GM12878 (cell line): ENCODE measurements at regions of chr17 and their contacts with region 1.

Region 1: DNA sequence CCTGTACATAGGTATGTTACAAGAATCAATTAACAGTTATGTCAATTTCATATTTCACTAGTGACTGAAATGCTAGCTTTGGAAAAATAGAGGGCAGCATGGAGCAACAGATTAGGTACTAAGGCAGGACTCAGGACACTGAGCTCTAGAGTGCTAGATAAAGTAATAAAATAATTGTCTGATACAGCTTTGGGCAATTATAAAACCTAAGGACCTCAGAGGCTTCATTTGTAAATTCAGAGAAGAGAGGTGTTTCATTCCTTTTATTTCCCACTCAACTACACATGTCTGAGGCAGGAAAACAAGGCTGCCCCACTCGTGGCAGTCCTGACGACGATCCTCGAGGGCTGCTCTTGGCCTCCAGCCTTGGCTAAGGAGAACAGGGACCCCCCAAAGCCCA is 81.5 kb downstream of the CA4 start:
- DNase-seq: no peak
- ATAC-seq: peak; percentile 59; the same call in 2 of the 3 replicates
- H3K4me3 ChIP-seq: no peak overlapping the region
- H3K27ac ChIP-seq: no peak overlapping the region
- H3K4me1 ChIP-seq: no peaks in the 10 kb centered on the region
- H3K27me3 ChIP-seq: no peaks in the 10 kb centered on the region
- CTCF ChIP-seq: peak; percentile 36 to 51 (median 42)
- EP300 ChIP-seq: no peak
- POLR2A ChIP-seq: no peak
- RAD21 ChIP-seq: peak; percentile 54

Region 2: GRCh38 chr17:59734226-59734625 is 497.0 kb before region 1 on chr17:
- CTCF ChIA-PET with region 1: no interaction called
- POLR2A ChIA-PET with region 1: no interaction called
- RAD21 ChIA-PET with region 1: no interaction called
- SMC1A ChIA-PET with region 1: no interaction called
- in situ Hi-C with region 1: no loop called
- intact Hi-C with region 1: no loop called
- DNase-seq: no peak
- ATAC-seq: no peak
- H3K4me3 ChIP-seq: no peak overlapping the region
- H3K27ac ChIP-seq: no peak overlapping the region
- H3K4me1 ChIP-seq: no peaks in the 10 kb centered on the region; the same call in 1 of the 2 replicates
- H3K27me3 ChIP-seq: no peaks in the 10 kb centered on the region
- CTCF ChIP-seq: no peak
- EP300 ChIP-seq: no peak
- POLR2A ChIP-seq: no peak
- RAD21 ChIP-seq: no peak

Region 3: GRCh38 chr17:60165958-60166357 is 65.3 kb before region 1 on chr17:
- CTCF ChIA-PET with region 1: no interaction called
- POLR2A ChIA-PET with region 1: no interaction called
- RAD21 ChIA-PET with region 1: no interaction called
- SMC1A ChIA-PET with region 1: no interaction called
- in situ Hi-C with region 1: no loop called
- intact Hi-C with region 1: no loop called
- DNase-seq: no peak
- ATAC-seq: peak; percentile 84
- H3K4me3 ChIP-seq: no peak overlapping the region
- H3K27ac ChIP-seq: no peak overlapping the region
- H3K4me1 ChIP-seq: peaks cover 3% of the 10 kb centered on the region
- H3K27me3 ChIP-seq: no peaks in the 10 kb centered on the region
- CTCF ChIP-seq: no peak
- EP300 ChIP-seq: no peak
- POLR2A ChIP-seq: no peak
- RAD21 ChIP-seq: no peak

Region 4: DNA sequence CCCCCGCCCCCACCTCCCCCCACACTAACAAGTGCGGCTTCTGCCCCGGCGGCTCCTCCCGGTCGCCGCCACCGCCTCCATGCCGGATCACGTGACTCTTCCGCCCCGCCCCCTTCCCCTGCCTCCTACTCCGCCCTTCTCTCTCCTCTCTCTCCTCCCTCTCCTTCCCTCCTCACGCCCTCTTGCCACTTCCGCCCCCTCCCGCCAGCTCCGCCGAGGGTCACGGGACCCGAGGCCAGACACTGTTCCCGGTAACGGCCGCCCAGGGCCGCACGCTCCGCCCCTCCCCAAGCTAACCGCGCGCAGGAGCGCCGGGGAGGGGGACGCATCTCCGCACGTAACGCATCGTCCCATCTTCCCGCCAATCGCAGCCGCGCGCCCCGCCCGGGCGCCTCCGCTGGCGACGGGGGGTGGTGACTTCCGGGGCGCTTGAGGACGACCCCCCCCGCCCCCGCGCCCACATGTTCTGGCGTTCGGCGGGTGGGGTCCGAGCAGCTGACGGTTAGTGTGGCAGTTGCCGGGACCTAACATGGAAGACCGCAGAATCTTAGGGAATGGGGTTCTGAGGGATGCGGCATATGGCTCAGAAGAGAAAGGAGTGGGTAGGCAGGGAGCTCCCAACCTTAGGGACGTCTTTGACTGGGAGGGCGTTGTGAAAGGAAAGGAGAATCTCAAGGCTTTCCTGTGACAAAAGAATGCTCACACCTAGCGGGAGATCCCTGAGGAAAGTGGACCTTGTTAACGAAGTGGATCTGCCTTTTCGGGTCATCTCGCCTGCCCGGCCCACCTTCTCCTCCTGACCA is 161.0 kb after region 1 on chr17 and contains the start of gene USP32:
- CTCF ChIA-PET with region 1: interaction called, 14 read pairs
- POLR2A ChIA-PET with region 1: no interaction called
- RAD21 ChIA-PET with region 1: interaction called, 9 read pairs
- SMC1A ChIA-PET with region 1: interaction called, 3 read pairs
- in situ Hi-C with region 1: no loop called
- intact Hi-C with region 1: no loop called
- DNase-seq: peak; percentile 96
- ATAC-seq: peak; percentile 88
- H3K4me3 ChIP-seq: peak within 1 kb of the TSS; percentile 97
- H3K27ac ChIP-seq: peak within 1 kb of the TSS; percentile 89
- H3K4me1 ChIP-seq: no peaks in the 10 kb centered on the region
- H3K27me3 ChIP-seq: no peaks in the 10 kb centered on the region
- CTCF ChIP-seq: peak in 2 of 3 experiments; percentile 15 to 16; a peak in 1 of 6 replicates
- EP300 ChIP-seq: peak in 1 of 2 experiments; percentile 36; a peak in 1 of 4 replicates
- POLR2A ChIP-seq: peak; percentile 87
- RAD21 ChIP-seq: no peak
- polyA plus RNA-seq, gene USP32: 7.8 to 9.8 TPM

Region 5: DNA sequence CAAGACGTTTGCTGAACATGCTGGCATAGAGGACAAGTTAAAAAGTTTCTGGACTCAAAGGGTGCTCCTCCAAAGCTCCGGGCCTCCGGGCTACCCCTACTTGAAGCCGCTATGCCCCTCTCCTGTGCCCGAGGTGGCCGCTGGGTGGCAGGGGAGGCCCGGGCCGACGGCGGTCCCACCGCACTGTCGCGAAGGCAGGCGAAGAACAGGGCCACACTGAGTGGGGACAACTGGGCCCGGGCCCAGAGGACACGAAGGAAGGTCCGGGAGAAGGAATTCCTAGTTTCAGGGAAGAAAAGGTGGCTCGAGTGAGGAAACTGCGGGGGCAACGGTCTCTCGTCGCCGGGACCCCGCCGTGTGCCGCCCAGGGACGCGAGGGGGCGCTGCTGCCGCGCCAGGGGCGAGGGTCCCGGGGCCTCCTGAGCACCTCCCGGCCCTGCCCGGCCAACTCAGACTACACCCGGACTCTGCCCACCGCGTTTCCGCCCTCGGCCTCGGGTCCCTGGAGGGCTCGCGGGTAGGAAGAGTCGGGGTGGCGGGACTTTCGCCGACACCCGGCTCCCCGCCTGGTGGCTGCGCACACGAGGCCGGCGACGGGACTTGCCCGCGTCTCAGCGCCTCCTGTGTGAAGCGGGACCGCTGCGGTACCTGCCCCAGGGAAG is 190.2 kb after region 1 on chr17:
- CTCF ChIA-PET with region 1: interaction called, 9 read pairs
- POLR2A ChIA-PET with region 1: no interaction called
- RAD21 ChIA-PET with region 1: interaction called, 9 read pairs
- SMC1A ChIA-PET with region 1: interaction called, 5 read pairs
- in situ Hi-C with region 1: no loop called
- intact Hi-C with region 1: loop called (anchors 5 kb)
- DNase-seq: no peak
- ATAC-seq: peak; percentile 99
- H3K4me3 ChIP-seq: peak overlapping the region; percentile 61
- H3K27ac ChIP-seq: no peak overlapping the region
- H3K4me1 ChIP-seq: no peaks in the 10 kb centered on the region
- H3K27me3 ChIP-seq: no peaks in the 10 kb centered on the region
- CTCF ChIP-seq: peak; percentile 57 to 94 (median 90)
- EP300 ChIP-seq: no peak
- POLR2A ChIP-seq: peak; percentile 75
- RAD21 ChIP-seq: peak; percentile 64

Region 6: DNA sequence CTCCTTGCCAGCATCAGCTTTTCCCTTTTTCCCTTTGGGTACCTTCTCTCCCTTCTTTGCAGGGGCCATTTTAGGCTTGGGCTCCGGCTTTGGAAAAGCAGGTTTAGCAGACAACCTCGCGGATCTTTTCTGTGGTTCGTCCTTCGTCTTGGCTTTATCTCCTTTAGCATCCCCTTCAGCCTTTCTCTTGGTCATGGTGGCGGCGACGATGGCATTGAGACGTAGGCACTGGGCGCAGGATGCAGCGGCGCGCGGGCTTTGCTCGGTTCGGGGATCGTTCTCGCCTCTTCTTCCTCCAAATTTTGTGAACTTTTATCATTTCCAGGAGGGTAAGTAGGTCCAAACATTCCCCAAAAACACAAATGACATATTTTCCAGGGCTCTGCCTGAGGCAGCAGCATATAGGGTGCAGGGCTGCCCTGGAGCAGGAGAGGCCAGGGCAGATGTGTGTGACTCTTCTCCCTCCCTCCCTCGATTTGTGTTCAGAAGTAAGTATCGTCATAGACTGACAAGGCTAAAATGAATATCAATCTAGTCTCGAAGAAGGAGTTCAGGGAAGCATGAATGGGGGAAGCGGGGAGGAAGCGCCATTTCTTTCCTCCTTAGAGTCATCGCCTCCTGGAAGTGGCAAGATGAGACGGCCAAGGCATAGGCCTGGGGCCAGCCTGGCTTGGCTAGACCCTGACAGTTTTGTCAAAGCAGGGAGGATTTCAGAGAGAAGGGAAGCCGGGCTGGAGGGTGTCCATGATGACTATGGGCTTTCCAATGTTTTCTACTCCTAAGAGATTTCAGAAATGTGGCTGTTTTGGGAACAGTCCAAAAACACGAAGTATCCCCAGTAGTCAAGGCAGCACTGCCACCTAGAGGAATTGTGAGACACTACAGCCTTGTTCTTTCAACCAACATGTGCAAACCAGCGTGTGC is 204.3 kb after region 1 on chr17:
- CTCF ChIA-PET with region 1: interaction called, 5 read pairs
- POLR2A ChIA-PET with region 1: no interaction called
- RAD21 ChIA-PET with region 1: interaction called, 4 read pairs
- SMC1A ChIA-PET with region 1: interaction called, 3 read pairs
- in situ Hi-C with region 1: no loop called
- intact Hi-C with region 1: loop called (anchors 2 kb)
- DNase-seq: peak; percentile 31
- ATAC-seq: peak; percentile 79
- H3K4me3 ChIP-seq: no peak overlapping the region
- H3K27ac ChIP-seq: no peak overlapping the region
- H3K4me1 ChIP-seq: peaks cover 13% of the 10 kb centered on the region
- H3K27me3 ChIP-seq: no peaks in the 10 kb centered on the region
- CTCF ChIP-seq: peak; percentile 82 to 96 (median 84); a peak in 5 of 6 replicates
- EP300 ChIP-seq: no peak
- POLR2A ChIP-seq: no peak
- RAD21 ChIP-seq: peak; percentile 94